ENCODE measurements at regions of chr2 and their contacts with region 1.

Region 1: GRCh38 chr2:212005085-212005671 is 533.4 kb downstream of the ERBB4 start:
- DNase-seq: no peak
- H3K4me3 ChIP-seq: no peak overlapping the region
- H3K27ac ChIP-seq: no peak overlapping the region
- H3K27me3 ChIP-seq: no peaks in the 10 kb centered on the region
- CTCF ChIP-seq: peak; percentile 61

Region 2: DNA sequence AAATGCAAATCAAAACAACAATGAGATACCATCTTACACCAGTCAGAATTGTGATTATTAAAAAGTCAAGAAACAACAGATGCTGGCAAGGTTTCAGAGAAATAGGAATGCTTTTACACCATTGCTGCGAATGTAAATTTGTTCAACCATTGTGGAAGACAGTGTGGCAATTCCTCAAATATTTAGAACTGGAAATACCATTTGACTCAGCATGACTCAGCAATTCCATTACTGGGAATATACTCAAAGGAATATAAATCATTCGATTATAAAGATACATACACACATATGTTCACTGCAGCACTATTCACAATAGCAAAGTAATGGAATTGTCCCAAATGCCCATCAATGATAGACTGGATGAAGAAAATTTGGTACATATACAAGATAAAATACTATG is 16.8 kb after region 1 on chr2:
- CTCF ChIA-PET with region 1: interaction called, 11 read pairs
- POLR2A ChIA-PET with region 1: no interaction called
- DNase-seq: peak; percentile 21
- H3K4me3 ChIP-seq: no peak overlapping the region
- H3K27ac ChIP-seq: no peak overlapping the region
- H3K27me3 ChIP-seq: no peaks in the 10 kb centered on the region
- CTCF ChIP-seq: no peak

Region 3: GRCh38 chr2:212032032-212032431 is 26.9 kb after region 1 on chr2:
- CTCF ChIA-PET with region 1: no interaction called
- POLR2A ChIA-PET with region 1: no interaction called
- DNase-seq: no peak
- H3K4me3 ChIP-seq: no peak overlapping the region
- H3K27ac ChIP-seq: no peak overlapping the region
- H3K27me3 ChIP-seq: no peaks in the 10 kb centered on the region
- CTCF ChIP-seq: no peak

Measured in AG04450 (cell line).